PC-9 (cell line): ENCODE measurements at regions of chr7 and their contacts with region 1.

Region 1: GRCh38 chr7:4641667-4642467 is 40.2 kb upstream of the FOXK1 start:
- DNase-seq: peak; percentile 84 to 99
- H3K4me3 ChIP-seq: peak overlapping the region; percentile 69
- H3K27ac ChIP-seq: peak overlapping the region; percentile 92
- H3K4me1 ChIP-seq: peaks cover 6% of the 10 kb centered on the region
- H3K27me3 ChIP-seq: no peaks in the 10 kb centered on the region
- CTCF ChIP-seq: no peak; the same call in 1 of the 2 replicates

Region 2: GRCh38 chr7:4744391-4745264 is 102.8 kb after region 1 on chr7:
- CTCF ChIA-PET with region 1: no interaction called
- POLR2A ChIA-PET with region 1: interaction called, 8 read pairs
- intact Hi-C with region 1: loop called (anchors 1 kb)
- DNase-seq: peak; percentile 98 to 100
- H3K4me3 ChIP-seq: peak overlapping the region; percentile 30; the same call in 1 of the 2 replicates
- H3K27ac ChIP-seq: peak overlapping the region; percentile 93
- H3K4me1 ChIP-seq: peaks cover 37% of the 10 kb centered on the region
- H3K27me3 ChIP-seq: no peaks in the 10 kb centered on the region
- CTCF ChIP-seq: no peak